HCT116 (cell line): ENCODE measurements at regions of chr5 and their contacts with region 1.

Region 1: DNA sequence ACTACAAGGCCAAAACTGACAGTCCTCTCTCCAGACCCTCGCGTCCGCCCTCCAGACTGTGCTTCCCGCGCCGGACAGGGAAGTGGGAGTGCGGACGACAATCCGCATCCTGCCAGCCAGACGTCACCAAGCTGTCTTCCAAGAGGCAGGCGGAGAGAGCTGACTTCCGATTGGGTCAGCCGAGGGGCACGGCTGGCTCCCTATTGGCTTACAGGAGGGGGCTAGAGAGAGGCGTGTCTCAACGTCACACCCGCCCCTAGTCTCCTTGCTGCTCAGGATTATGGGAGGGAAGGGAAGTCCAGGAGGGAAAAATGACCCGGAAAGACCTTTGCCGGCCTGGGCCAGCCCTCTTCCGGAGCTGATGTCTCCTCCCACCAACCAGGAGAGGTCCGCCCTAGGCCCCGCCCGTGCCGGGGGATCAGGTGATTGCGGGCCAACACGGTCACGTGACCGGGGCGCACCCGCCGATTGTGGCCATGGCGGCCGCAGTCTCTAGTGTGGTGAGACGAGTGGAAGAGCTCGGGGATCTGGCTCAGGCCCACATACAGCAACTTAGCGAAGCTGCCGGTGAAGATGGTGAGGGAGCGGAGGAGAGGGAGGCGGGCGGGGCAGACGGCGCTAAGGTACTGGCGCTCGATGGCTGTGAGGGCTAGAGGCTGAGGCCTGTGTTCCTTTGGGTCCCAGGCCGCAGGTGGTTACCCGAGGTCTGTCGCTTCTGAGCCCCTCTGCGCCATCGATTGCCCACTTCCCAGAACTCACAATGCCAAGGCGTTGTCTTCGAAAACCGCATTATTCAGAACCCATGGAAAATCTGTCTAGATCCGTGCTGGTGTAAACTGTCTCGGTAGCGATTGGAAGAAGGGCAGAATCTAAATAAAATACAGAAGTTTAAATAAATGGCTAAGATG is at the start of gene RIMOC1:
- DNase-seq: peak; percentile 97
- ATAC-seq: peak; percentile 98
- H3K4me3 ChIP-seq: peak within 1 kb of the TSS; percentile 74 to 89
- H3K27ac ChIP-seq: peak within 1 kb of the TSS; percentile 47
- H3K4me1 ChIP-seq: peaks cover 8 to 18% of the 10 kb centered on the region in 2 experiments; a peak in 3 of 4 replicates
- H3K27me3 ChIP-seq: no peaks in the 10 kb centered on the region
- CTCF ChIP-seq: no peak
- POLR2A ChIP-seq: peak; percentile 58
- RAD21 ChIP-seq: no peak
- total RNA-seq, gene RIMOC1: 28.2 TPM

Region 2: GRCh38 chr5:40497573-40497972 is 1406.6 kb before region 1 on chr5:
- CTCF ChIA-PET with region 1: no interaction called
- POLR2A ChIA-PET with region 1: no interaction called
- RAD21 ChIA-PET with region 1: no interaction called
- intact Hi-C with region 1: no loop called
- DNase-seq: no peak
- ATAC-seq: no peak
- H3K4me3 ChIP-seq: no peak overlapping the region
- H3K27ac ChIP-seq: no peak overlapping the region
- H3K4me1 ChIP-seq: no peaks in the 10 kb centered on the region
- H3K27me3 ChIP-seq: no peaks in the 10 kb centered on the region
- CTCF ChIP-seq: no peak
- POLR2A ChIP-seq: no peak
- RAD21 ChIP-seq: no peak

Region 3: GRCh38 chr5:41924872-41925554 is 20.9 kb after region 1 on chr5 and contains the start of gene FBXO4:
- CTCF ChIA-PET with region 1: no interaction called
- POLR2A ChIA-PET with region 1: interaction called, 7 read pairs
- RAD21 ChIA-PET with region 1: no interaction called
- intact Hi-C with region 1: loop called (anchors 1 kb)
- DNase-seq: peak; percentile 61
- ATAC-seq: peak; percentile 98
- H3K4me3 ChIP-seq: peak within 1 kb of the TSS; percentile 66
- H3K27ac ChIP-seq: peak within 1 kb of the TSS; percentile 73
- H3K4me1 ChIP-seq: peaks cover 3 to 12% of the 10 kb centered on the region in 2 experiments; a peak in 3 of 4 replicates
- H3K27me3 ChIP-seq: no peaks in the 10 kb centered on the region
- CTCF ChIP-seq: peak; percentile 24 to 50 (median 45); a peak in 5 of 6 replicates
- POLR2A ChIP-seq: peak; percentile 81
- RAD21 ChIP-seq: peak; percentile 30; the same call in 1 of the 2 replicates
- total RNA-seq, gene FBXO4: 9.0 TPM